ENCODE measurements at regions of chr6 and their contacts with region 1.

Region 1: GRCh38 chr6:168865-169455 is 123.3 kb upstream of the DUSP22 start:
- DNase-seq: no peak
- ATAC-seq: no peak
- H3K4me3 Mint-ChIP-seq: no peak overlapping the region
- H3K27ac Mint-ChIP-seq: no peak overlapping the region
- H3K4me1 Mint-ChIP-seq: no peaks in the 10 kb centered on the region
- H3K27me3 Mint-ChIP-seq: peaks cover 10% of the 10 kb centered on the region

Region 2: GRCh38 chr6:156010-156409 is 12.9 kb before region 1 on chr6:
- CTCF ChIA-PET with region 1: interaction called, 24 read pairs
- POLR2A ChIA-PET with region 1: no interaction called
- DNase-seq: no peak
- ATAC-seq: no peak
- H3K4me3 Mint-ChIP-seq: no peak overlapping the region
- H3K27ac Mint-ChIP-seq: no peak overlapping the region
- H3K4me1 Mint-ChIP-seq: peaks cover 48% of the 10 kb centered on the region
- H3K27me3 Mint-ChIP-seq: peaks cover 49% of the 10 kb centered on the region

Region 3: GRCh38 chr6:181049-181654 is 12.2 kb after region 1 on chr6:
- CTCF ChIA-PET with region 1: interaction called, 22 read pairs
- POLR2A ChIA-PET with region 1: no interaction called
- DNase-seq: no peak
- ATAC-seq: no peak
- H3K4me3 Mint-ChIP-seq: peak overlapping the region; percentile 6
- H3K27ac Mint-ChIP-seq: peak overlapping the region; percentile 78
- H3K4me1 Mint-ChIP-seq: peaks cover 33% of the 10 kb centered on the region
- H3K27me3 Mint-ChIP-seq: peaks cover 3% of the 10 kb centered on the region

Measured in activated CD8-positive, alpha-beta T cell treated with anti-CD3 and anti-CD28 coated beads, Interleukin-2, amount 10 ng/mL, durations not matched to agents 7 days and 5 days (primary cell).